ENCODE measurements at regions of chr9 and their contacts with region 1.

Region 1: GRCh38 chr9:128504485-128505413 is at the start of gene GLE1:
- DNase-seq: peak; percentile 99
- ATAC-seq: peak; percentile 95
- H3K4me3 Mint-ChIP-seq: peak within 1 kb of the TSS; percentile 99
- H3K27ac Mint-ChIP-seq: peak within 1 kb of the TSS; percentile 98
- H3K4me1 Mint-ChIP-seq: peaks cover 24% of the 10 kb centered on the region
- H3K27me3 Mint-ChIP-seq: no peaks in the 10 kb centered on the region
- CTCF ChIP-seq: no peak
- total RNA-seq, gene GLE1: 28.8 and 31.8 TPM in 2 replicates

Region 2: DNA sequence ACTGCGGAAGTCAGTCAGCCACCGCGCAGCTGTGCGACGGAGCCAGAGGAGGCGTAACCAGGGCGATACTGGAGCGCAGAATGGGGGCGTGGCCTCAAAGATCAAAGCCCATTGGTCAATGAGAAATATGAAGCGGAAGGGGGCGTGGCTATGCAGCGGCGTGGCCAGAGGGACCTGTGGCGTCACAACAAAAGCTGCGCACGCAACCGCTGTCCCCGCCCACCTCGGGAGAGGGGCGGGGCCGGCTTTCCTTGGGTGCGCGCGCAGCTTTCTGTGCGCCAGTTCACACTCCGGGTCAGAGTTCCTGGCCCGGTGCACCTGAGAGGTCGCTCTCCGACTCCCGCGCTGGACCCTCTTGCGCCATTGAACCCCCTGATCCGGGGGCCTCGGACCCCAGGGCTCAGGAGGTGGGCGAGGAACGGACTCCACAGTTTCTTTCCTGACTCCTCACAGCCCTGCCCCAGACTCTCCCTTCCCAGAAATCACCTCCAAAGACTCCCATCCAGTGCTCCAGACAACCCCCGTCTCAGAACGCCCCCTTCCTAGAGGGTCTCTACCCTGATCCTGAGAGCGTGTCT is 228.7 kb before region 1 on chr9 and contains the starts of genes GOLGA2 and SWI5:
- CTCF ChIA-PET with region 1: no interaction called
- POLR2A ChIA-PET with region 1: no interaction called
- intact Hi-C with region 1: loop called (anchors 5 kb)
- DNase-seq: peak; percentile 96
- ATAC-seq: peak; percentile 95
- H3K4me3 Mint-ChIP-seq: peak within 1 kb of the TSS; percentile 97
- H3K27ac Mint-ChIP-seq: peak within 1 kb of the TSS; percentile 92
- H3K4me1 Mint-ChIP-seq: peaks cover 27% of the 10 kb centered on the region
- H3K27me3 Mint-ChIP-seq: no peaks in the 10 kb centered on the region
- CTCF ChIP-seq: no peak
- total RNA-seq, gene GOLGA2: 46.0 and 53.5 TPM in 2 replicates
- total RNA-seq, gene SWI5: 7.2 and 10.4 TPM in 2 replicates

Region 3: GRCh38 chr9:128370826-128371621 is 133.7 kb before region 1 on chr9 and contains the start of gene URM1:
- CTCF ChIA-PET with region 1: no interaction called
- POLR2A ChIA-PET with region 1: interaction called, 9 read pairs
- intact Hi-C with region 1: loop called (anchors 1 kb)
- DNase-seq: peak; percentile 96
- ATAC-seq: peak; percentile 91
- H3K4me3 Mint-ChIP-seq: peak within 1 kb of the TSS; percentile 97
- H3K27ac Mint-ChIP-seq: peak within 1 kb of the TSS; percentile 94
- H3K4me1 Mint-ChIP-seq: peaks cover 31% of the 10 kb centered on the region
- H3K27me3 Mint-ChIP-seq: no peaks in the 10 kb centered on the region
- CTCF ChIP-seq: no peak
- total RNA-seq, gene URM1: 55.8 and 65.1 TPM in 2 replicates

Region 4: GRCh38 chr9:128438343-128439109 is 66.2 kb before region 1 on chr9:
- CTCF ChIA-PET with region 1: no interaction called
- POLR2A ChIA-PET with region 1: no interaction called
- intact Hi-C with region 1: loop called (anchors 2 kb)
- DNase-seq: peak; percentile 77
- ATAC-seq: peak; percentile 97
- H3K4me3 Mint-ChIP-seq: no peak overlapping the region
- H3K27ac Mint-ChIP-seq: no peak overlapping the region
- H3K4me1 Mint-ChIP-seq: peaks cover 5% of the 10 kb centered on the region
- H3K27me3 Mint-ChIP-seq: no peaks in the 10 kb centered on the region
- CTCF ChIP-seq: peak; percentile 16

Region 5: GRCh38 chr9:128455849-128456612 is 48.7 kb before region 1 on chr9 and contains the start of gene ODF2:
- CTCF ChIA-PET with region 1: no interaction called
- POLR2A ChIA-PET with region 1: interaction called, 7 read pairs
- intact Hi-C with region 1: loop called (anchors 1 kb)
- DNase-seq: peak; percentile 99
- ATAC-seq: peak; percentile 88
- H3K4me3 Mint-ChIP-seq: peak within 1 kb of the TSS; percentile 88
- H3K27ac Mint-ChIP-seq: peak within 1 kb of the TSS; percentile 83
- H3K4me1 Mint-ChIP-seq: peaks cover 14% of the 10 kb centered on the region
- H3K27me3 Mint-ChIP-seq: no peaks in the 10 kb centered on the region
- CTCF ChIP-seq: no peak
- total RNA-seq, gene ODF2: 41.2 and 45.7 TPM in 2 replicates

Region 6: GRCh38 chr9:128568470-128569078 is 63.8 kb after region 1 on chr9:
- CTCF ChIA-PET with region 1: no interaction called
- POLR2A ChIA-PET with region 1: no interaction called
- intact Hi-C with region 1: no loop called
- DNase-seq: no peak
- ATAC-seq: no peak
- H3K4me3 Mint-ChIP-seq: no peak overlapping the region
- H3K27ac Mint-ChIP-seq: no peak overlapping the region
- H3K4me1 Mint-ChIP-seq: no peaks in the 10 kb centered on the region
- H3K27me3 Mint-ChIP-seq: no peaks in the 10 kb centered on the region
- CTCF ChIP-seq: no peak

Region 7: DNA sequence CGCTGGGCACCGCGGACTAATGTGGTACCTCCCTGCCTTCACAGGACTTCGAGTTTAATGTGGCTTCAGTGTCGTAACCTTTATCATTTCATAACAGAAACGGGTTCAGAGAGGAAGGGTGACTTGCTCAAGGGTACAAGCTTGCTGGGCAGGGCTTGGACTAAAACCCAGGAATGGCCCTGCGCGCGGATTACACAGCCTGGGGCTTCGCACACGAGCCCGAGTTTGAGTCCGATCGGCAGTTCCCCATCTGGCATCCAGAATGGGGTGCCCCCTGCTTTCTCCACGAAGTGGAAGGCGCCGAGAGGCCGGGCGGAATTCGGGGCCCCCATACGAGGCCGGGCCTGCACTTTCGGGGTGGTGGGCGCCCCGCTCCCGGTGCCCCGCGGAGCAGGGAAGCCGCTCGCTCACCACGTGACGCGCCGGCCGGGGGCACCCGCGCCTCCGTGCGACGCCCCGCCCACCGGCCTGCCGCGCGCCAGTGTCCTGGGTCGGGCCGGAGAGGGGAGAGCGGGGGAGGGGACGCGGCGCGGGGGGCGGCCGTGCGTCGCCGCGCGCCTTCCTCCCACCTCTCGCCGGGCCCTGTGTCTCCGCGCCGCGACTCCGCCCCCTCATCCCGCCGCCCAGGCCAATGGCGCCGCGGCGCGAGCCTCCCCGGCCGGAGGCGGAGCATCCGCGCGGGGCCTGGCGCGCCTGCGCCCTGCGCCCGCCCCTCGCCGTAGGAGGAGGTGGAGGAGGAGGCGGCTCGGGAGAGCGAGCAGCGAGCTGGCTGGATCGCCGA is 184.0 kb after region 1 on chr9 and contains the start of gene SET:
- CTCF ChIA-PET with region 1: no interaction called
- POLR2A ChIA-PET with region 1: no interaction called
- intact Hi-C with region 1: loop called (anchors 1 kb)
- DNase-seq: peak; percentile 97
- ATAC-seq: peak; percentile 81
- H3K4me3 Mint-ChIP-seq: peak within 1 kb of the TSS; percentile 98
- H3K27ac Mint-ChIP-seq: peak within 1 kb of the TSS; percentile 87
- H3K4me1 Mint-ChIP-seq: peaks cover 68% of the 10 kb centered on the region
- H3K27me3 Mint-ChIP-seq: no peaks in the 10 kb centered on the region
- CTCF ChIP-seq: no peak
- total RNA-seq, gene SET: 762 and 801 TPM in 2 replicates

Region 8: GRCh38 chr9:128771745-128772519 is 267.2 kb after region 1 on chr9 and contains the start of gene ZER1:
- CTCF ChIA-PET with region 1: no interaction called
- POLR2A ChIA-PET with region 1: no interaction called
- intact Hi-C with region 1: loop called (anchors 5 kb)
- DNase-seq: peak; percentile 96
- ATAC-seq: peak; percentile 93
- H3K4me3 Mint-ChIP-seq: peak within 1 kb of the TSS; percentile 92
- H3K27ac Mint-ChIP-seq: peak within 1 kb of the TSS; percentile 89
- H3K4me1 Mint-ChIP-seq: peaks cover 24% of the 10 kb centered on the region
- H3K27me3 Mint-ChIP-seq: no peaks in the 10 kb centered on the region
- CTCF ChIP-seq: no peak
- total RNA-seq, gene ZER1: 24.0 and 26.0 TPM in 2 replicates